Heart right ventricle (tissue), 16 donors: ENCODE measurements at regions of chr2 and their contacts with region 1.

Region 1: DNA sequence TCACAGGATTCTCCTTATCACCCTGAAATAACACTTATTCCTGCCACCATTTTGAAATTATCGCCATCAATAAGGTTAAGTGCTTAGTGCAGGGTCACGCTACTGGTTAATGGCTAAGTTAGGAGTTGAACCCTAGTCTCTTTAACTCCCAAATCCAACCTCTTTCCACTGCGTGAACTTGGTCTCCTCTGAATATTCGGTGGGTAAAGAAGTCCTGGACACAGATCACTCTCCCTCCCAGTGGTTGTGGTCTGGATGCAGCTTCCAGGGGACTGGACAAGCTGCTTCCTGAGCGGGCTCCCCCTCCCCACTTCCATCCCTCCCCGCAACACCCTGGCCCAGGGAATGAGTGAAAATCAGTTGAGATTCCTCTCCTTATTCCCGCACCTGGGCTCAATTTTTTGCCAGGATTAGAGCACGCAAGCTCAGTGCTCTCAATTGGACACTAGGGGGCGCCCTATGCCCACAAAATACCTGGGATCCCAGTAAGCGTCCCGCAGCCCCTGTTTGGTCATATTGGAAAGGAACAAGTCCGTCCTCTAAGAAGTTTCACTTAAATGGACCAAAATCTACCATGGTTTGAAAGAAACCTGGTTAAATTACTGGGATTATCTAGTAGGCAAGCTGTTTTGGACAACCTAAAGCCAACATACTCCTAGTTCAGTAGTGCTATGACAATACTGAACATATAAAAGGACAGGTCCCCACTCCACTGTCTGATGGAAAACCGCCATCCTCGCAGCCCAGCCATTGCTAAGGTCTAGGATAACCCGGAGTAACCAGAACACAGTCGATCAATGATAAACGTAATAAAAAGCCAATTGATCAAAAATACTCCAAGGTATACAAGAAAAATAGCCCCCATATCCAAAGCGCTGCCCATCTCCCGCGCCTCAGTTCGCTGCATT is 40.4 kb downstream of the DHRS9 start:
- DNase-seq: peak; percentile 56 to 71
- ATAC-seq: peak; percentile 73 to 91 (median 84)
- H3K4me3 ChIP-seq: no peak overlapping the region
- H3K27ac ChIP-seq: no peak overlapping the region
- H3K4me1 ChIP-seq: peaks cover 0 to 52% (median 0%) of the 10 kb centered on the region in 9 donors
- H3K27me3 ChIP-seq: no peaks in the 10 kb centered on the region
- CTCF ChIP-seq: peak; percentile 59 to 91 (median 81)

Region 2: GRCh38 chr2:169141713-169142352 is 32.1 kb after region 1 on chr2:
- intact Hi-C with region 1: loop called in 3 of 10 experiments (anchors 2 to 5 kb)
- DNase-seq: peak in 1 of 2 donors; percentile 51
- ATAC-seq: peak in 5 of 8 donors; percentile 37 to 67 (median 57)
- H3K4me3 ChIP-seq: no peak overlapping the region
- H3K27ac ChIP-seq: no peak overlapping the region
- H3K4me1 ChIP-seq: peaks cover 0 to 15% (median 0%) of the 10 kb centered on the region in 9 donors
- H3K27me3 ChIP-seq: no peaks in the 10 kb centered on the region
- CTCF ChIP-seq: peak; percentile 34 to 82 (median 73)

Region 3: GRCh38 chr2:169193624-169194023 is 83.9 kb after region 1 on chr2:
- intact Hi-C with region 1: no loop called
- DNase-seq: no peak
- ATAC-seq: no peak
- H3K4me3 ChIP-seq: no peak overlapping the region
- H3K27ac ChIP-seq: no peak overlapping the region
- H3K4me1 ChIP-seq: no peaks in the 10 kb centered on the region
- H3K27me3 ChIP-seq: peaks cover 0 to 6% (median 0%) of the 10 kb centered on the region in 7 donors
- CTCF ChIP-seq: no peak

Region 4: DNA sequence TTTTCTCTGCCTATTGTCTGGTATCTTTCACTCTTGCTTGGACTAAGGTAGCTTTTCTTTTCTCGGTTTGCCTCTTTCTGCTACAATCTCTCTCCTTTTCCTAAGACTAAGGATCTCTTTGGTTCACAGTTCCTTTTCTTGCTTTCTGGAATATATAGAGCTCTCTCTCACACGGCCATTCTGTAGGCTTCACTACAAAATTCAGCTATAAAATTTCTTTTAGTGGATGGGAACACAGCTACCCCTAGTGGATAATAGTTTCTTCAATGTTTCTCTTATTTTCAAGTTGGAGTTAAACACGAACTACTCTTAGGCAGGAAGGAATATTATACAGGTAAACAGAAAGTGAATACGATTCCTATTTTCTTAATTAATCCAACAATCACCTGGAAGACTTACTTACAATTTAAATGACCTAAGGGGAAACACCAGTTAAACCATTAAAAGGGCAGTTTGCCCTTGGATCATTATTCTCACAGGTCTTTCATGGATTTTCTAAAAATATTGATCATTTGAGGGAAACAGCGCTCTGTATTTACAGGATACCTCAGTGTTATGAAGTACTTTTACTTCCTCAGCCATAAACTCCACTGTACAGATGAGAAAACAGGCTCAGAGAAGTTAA is 112.1 kb after region 1 on chr2:
- intact Hi-C with region 1: loop called in 1 of 10 experiments (anchors 1 kb)
- DNase-seq: no peak
- ATAC-seq: no peak
- H3K4me3 ChIP-seq: no peak overlapping the region
- H3K27ac ChIP-seq: no peak overlapping the region
- H3K4me1 ChIP-seq: no peaks in the 10 kb centered on the region
- H3K27me3 ChIP-seq: no peaks in the 10 kb centered on the region
- CTCF ChIP-seq: peak in 6 of 9 donors; percentile 29 to 50 (median 37)

Region 5: GRCh38 chr2:169275696-169276444 is 166.1 kb after region 1 on chr2:
- intact Hi-C with region 1: loop called in 2 of 10 experiments (anchors 5 kb)
- DNase-seq: no peak
- ATAC-seq: no peak
- H3K4me3 ChIP-seq: no peak overlapping the region
- H3K27ac ChIP-seq: no peak overlapping the region
- H3K4me1 ChIP-seq: no peaks in the 10 kb centered on the region
- H3K27me3 ChIP-seq: peaks cover 0 to 4% (median 0%) of the 10 kb centered on the region in 7 donors
- CTCF ChIP-seq: peak in 7 of 9 donors; percentile 10 to 41 (median 35)

Region 6: DNA sequence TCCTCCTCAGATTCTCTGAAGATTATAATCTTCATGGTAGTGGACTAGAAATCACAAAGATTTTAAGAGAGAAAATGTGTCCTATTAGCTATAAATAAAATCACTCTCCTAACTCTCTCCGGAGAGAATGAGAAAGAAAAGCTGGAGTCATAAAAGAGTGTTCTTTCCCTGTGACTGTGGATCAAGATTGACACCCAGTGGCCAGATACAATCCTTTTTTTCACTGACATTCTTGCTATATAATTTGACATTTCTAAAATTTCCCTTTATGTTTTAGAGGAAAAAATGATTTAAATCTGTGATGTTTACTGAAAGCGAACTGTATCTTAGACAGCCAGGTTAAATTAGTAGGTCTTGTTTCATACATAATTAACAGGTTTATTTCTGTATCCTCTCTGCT is 287.9 kb after region 1 on chr2:
- intact Hi-C with region 1: loop called in 2 of 10 experiments (anchors 5 to 10 kb)
- DNase-seq: no peak
- ATAC-seq: no peak
- H3K4me3 ChIP-seq: no peak overlapping the region
- H3K27ac ChIP-seq: no peak overlapping the region
- H3K4me1 ChIP-seq: no peaks in the 10 kb centered on the region
- H3K27me3 ChIP-seq: peaks cover 0 to 17% (median 5%) of the 10 kb centered on the region in 7 donors
- CTCF ChIP-seq: peak in 5 of 9 donors; percentile 10 to 39 (median 25)